ENCODE measurements at regions of chr7 and their contacts with region 1.

Region 1: GRCh38 chr7:57305192-57305748 is 144.7 kb upstream of the ZNF716 start:
- DNase-seq: peak; percentile 28
- ATAC-seq: peak in 1 of 2 donors; percentile 58

Region 2: DNA sequence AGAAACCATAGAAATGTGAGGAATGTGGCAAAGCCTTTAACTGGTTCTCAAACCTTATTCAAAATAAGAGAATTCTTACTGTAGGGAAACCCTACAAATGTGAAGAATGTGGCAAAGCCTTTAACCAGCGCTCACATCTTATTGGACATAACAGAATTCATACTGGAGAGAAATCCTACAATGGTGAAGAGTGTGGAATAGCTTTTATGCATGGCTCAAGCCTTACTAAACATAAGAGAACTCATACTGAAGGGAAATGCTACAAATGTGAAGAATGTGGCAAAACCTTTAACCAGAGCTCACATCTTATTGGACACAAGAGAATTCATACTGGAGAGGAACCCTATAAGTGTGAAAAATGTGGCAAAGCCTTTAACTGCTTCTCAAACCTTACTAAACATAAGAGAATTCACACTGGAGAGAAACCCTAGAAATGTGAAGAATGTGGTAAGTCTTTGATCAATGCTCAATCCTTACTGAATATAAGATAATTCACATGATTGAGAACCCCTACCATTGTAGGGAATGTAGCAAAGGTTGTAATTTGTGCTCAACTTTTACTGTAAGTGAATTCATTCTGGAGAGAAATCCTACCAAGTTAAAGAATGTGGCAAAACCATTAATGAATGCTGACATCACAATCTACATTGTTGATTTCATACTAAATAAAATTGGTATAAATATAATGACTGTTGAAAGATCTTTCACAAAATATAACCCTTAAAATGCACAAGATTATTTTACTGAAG is 30.6 kb before region 1 on chr7:
- intact Hi-C with region 1: no loop called
- DNase-seq: no peak
- ATAC-seq: no peak

Region 3: DNA sequence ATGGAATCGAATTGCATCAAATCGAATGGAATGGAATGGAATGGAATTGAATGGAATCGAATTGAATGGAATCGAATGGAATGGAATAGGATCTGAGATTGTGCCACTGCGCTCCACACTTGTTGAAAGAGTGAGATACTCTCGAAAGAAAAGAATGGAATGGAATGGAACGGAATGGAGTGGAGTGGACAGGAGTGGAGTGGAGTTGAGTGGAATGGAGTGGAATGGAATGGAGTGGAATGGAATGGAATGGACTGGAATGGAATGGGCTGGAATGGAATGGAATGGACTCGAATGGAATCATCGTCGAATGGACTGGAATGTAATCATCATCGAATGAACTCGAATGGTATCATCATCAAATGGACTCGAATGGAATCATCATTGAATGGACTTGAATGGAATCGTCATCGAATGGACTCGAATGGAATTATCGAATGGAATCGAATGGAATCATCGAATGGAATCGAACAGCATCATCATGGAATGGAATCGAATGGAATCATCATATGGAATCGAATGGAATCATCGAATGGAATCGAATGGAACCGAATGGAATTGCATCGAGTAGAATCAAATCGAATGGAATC is 182.8 kb after region 1 on chr7:
- intact Hi-C with region 1: loop called in 1 of 2 experiments (anchors 10 kb)
- DNase-seq: no peak
- ATAC-seq: no peak